ENCODE measurements at regions of chr22 and their contacts with region 1.

Region 1: GRCh38 chr22:46035742-46036557 is 59.0 kb upstream of the WNT7B start:
- DNase-seq: peak; percentile 100

Region 2: GRCh38 chr22:46019351-46019750 is 16.6 kb before region 1 on chr22:
- CTCF ChIA-PET with region 1: no interaction called
- POLR2A ChIA-PET with region 1: interaction called, 69 read pairs
- DNase-seq: no peak

Region 3: GRCh38 chr22:46079861-46080821 is 44.2 kb after region 1 on chr22:
- CTCF ChIA-PET with region 1: no interaction called
- POLR2A ChIA-PET with region 1: no interaction called
- DNase-seq: no peak